ENCODE measurements at regions of chr1 and their contacts with region 1.

Region 1: GRCh38 chr1:210448297-210448892 is 119.7 kb downstream of the HHAT start:
- DNase-seq: peak; percentile 71
- H3K4me3 Mint-ChIP-seq: no peak overlapping the region
- H3K27ac Mint-ChIP-seq: no peak overlapping the region
- H3K4me1 Mint-ChIP-seq: peaks cover 11% of the 10 kb centered on the region
- H3K27me3 Mint-ChIP-seq: peaks cover 52% of the 10 kb centered on the region
- CTCF ChIP-seq: peak; percentile 93

Region 2: DNA sequence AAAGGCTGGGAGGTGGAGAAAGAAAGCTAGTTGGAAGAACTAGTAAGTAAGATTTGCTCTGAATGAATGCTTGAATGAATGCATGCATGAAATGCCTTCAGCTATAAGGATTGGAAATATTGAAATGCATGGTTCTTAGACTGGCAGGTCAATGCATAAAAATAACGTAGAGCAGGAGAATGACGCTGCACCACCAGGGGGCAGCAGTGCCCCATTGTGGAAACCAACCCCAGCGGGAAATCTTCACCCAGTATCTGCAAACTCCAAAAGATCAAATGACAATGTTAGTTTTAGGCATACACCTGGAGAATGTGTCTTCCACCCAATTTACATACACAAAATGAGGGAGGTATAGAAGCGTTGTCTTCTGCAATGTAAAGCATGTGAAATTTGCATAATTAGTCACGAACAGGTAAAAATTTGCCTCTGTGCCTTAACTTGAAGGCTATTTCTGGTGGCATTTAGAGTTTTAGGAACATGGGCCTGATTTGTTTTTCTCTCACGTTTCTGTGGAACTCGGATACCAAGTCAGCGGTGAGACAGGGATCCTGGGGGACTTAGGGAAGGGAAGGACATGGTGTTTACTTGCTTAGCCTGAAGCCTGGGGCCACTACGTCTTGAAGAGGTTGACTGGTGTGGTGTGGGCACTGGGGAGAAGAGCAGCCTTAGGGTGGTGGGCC is 41.0 kb before region 1 on chr1:
- CTCF ChIA-PET with region 1: interaction called, 35 read pairs
- POLR2A ChIA-PET with region 1: no interaction called
- intact Hi-C with region 1: no loop called
- DNase-seq: peak; percentile 84
- H3K4me3 Mint-ChIP-seq: no peak overlapping the region
- H3K27ac Mint-ChIP-seq: no peak overlapping the region
- H3K4me1 Mint-ChIP-seq: no peaks in the 10 kb centered on the region
- H3K27me3 Mint-ChIP-seq: no peaks in the 10 kb centered on the region
- CTCF ChIP-seq: peak; percentile 100

Region 3: GRCh38 chr1:210477381-210477783 is 29.0 kb after region 1 on chr1:
- CTCF ChIA-PET with region 1: interaction called, 21 read pairs
- POLR2A ChIA-PET with region 1: no interaction called
- intact Hi-C with region 1: no loop called
- DNase-seq: peak; percentile 88
- H3K4me3 Mint-ChIP-seq: no peak overlapping the region
- H3K27ac Mint-ChIP-seq: no peak overlapping the region
- H3K4me1 Mint-ChIP-seq: no peaks in the 10 kb centered on the region
- H3K27me3 Mint-ChIP-seq: peaks cover 13% of the 10 kb centered on the region
- CTCF ChIP-seq: no peak

Region 4: GRCh38 chr1:210944252-210944651 is 495.9 kb after region 1 on chr1:
- CTCF ChIA-PET with region 1: interaction called, 13 read pairs
- POLR2A ChIA-PET with region 1: no interaction called
- intact Hi-C with region 1: loop called (anchors 5 kb)
- DNase-seq: no peak
- H3K4me3 Mint-ChIP-seq: no peak overlapping the region
- H3K27ac Mint-ChIP-seq: no peak overlapping the region
- H3K4me1 Mint-ChIP-seq: no peaks in the 10 kb centered on the region
- H3K27me3 Mint-ChIP-seq: no peaks in the 10 kb centered on the region
- CTCF ChIP-seq: no peak

Region 5: DNA sequence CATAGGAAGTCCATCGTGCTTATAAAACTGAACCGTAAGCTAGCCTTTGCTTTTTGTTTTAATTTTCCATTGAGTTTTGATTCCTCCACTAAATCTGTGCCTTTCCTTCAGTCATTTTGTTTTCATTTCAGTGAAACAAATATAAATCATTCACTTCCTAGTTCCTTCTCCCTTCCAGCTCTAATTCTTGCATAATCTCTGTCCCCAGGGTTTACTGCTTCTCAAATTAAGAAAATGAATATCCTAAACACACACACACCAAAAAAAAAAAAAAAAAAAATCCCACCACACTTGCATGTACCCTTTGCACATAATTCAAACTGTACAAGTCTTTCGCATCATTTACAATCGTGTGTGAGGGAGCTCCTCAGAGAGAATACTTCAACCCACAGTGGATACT is 678.8 kb after region 1 on chr1:
- CTCF ChIA-PET with region 1: interaction called, 24 read pairs
- POLR2A ChIA-PET with region 1: no interaction called
- intact Hi-C with region 1: no loop called
- DNase-seq: no peak
- H3K4me3 Mint-ChIP-seq: no peak overlapping the region
- H3K27ac Mint-ChIP-seq: no peak overlapping the region
- H3K4me1 Mint-ChIP-seq: peaks cover 7% of the 10 kb centered on the region
- H3K27me3 Mint-ChIP-seq: peaks cover 13% of the 10 kb centered on the region
- CTCF ChIP-seq: no peak

Region 6: DNA sequence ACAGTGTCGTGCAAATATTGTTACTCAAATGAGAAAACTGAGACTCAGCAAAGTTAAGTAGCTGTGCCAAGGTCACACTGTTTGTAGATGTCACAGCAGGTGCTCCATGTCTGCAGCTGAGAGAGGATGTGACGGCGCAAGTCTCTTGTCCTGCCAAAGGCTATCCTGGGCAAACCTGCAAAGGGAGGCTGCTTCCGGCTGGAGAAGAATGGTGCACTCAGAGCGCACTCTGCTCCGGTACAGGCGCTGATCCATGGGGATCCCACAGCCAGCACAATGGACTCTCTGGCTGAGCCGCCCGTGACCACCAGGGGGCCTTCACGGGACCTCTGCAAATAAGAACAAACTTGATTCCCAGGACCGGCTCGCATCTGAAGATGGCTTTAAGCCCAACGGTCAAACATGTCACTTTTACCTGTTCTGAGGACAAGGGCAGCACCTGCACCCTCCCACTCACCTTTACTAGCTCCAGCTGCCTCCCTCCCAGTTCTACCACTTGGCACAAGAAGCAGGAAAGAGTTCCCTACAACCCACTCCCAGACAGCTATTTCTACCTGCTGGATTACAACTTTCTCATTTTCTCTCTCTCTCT is 1021.6 kb after region 1 on chr1:
- CTCF ChIA-PET with region 1: interaction called, 14 read pairs
- POLR2A ChIA-PET with region 1: interaction called, 3 read pairs
- intact Hi-C with region 1: loop called (anchors 2 kb)
- DNase-seq: peak; percentile 92
- H3K4me3 Mint-ChIP-seq: no peak overlapping the region
- H3K27ac Mint-ChIP-seq: no peak overlapping the region
- H3K4me1 Mint-ChIP-seq: peaks cover 15% of the 10 kb centered on the region
- H3K27me3 Mint-ChIP-seq: no peaks in the 10 kb centered on the region
- CTCF ChIP-seq: peak; percentile 98

Measured in MCF 10A (cell line).